ENCODE measurements at regions of chr11 and their contacts with region 1.

Region 1: DNA sequence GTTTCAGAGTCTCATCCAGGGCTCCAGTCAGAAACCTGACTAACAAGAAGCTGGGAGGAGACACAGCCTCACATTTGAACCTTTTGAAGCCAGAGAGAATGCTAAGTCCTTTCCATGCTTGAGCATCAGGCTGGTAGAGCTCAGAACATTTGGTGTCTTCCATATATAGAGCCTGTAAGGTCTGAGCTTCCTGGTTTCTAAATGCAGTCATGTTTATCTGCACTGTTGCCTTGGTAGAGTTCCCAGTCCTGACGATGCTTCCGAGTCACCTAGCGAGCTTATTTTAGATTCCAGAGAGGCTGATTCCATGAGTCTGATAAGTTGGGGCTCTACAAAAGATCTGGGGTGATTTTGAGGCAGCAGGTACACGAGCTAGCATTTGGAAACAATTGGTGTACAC is 68.4 kb upstream of the SORL1 start:
- DNase-seq: no peak
- ATAC-seq: no peak
- H3K4me3 Mint-ChIP-seq: no peak overlapping the region
- H3K27ac Mint-ChIP-seq: no peak overlapping the region
- H3K4me1 Mint-ChIP-seq: peaks cover 21% of the 10 kb centered on the region
- H3K27me3 Mint-ChIP-seq: no peaks in the 10 kb centered on the region
- CTCF ChIP-seq: no peak

Region 2: DNA sequence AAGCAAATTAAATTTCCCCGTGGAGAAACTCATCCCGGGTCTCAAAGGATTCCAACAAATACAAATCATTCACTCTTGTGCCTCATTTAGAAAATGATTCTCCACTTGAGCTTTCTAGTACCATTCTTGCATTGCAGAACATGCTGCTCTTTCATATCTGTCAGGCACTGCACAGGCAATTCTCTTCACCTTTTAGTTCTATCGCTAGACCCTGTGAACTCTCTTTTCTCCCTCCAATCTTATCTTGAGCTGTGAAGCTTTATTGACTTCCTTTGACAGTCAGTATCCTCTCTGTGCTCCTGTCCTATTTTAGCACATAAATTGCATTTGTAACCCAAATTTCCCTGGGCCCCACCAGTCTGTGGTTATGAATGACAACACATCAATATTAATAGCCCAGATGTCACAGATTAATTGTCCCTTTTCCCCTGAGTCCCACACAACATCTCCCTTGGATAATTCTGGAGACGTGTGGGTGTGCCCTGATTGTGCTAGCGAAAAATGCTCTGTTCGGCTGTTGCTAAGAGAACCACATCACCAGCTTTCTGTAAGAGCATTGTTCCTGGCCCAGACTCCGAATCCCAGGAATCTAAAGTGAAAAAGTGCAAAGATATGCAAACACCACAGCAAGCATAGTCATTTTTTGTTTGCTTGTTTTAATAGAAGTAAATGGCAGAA is 113.6 kb before region 1 on chr11:
- CTCF ChIA-PET with region 1: no interaction called
- POLR2A ChIA-PET with region 1: no interaction called
- DNase-seq: no peak
- ATAC-seq: no peak
- H3K4me3 Mint-ChIP-seq: no peak overlapping the region
- H3K27ac Mint-ChIP-seq: no peak overlapping the region
- H3K4me1 Mint-ChIP-seq: peaks cover 15% of the 10 kb centered on the region
- H3K27me3 Mint-ChIP-seq: peaks cover 4% of the 10 kb centered on the region; the same call in 1 of the 2 replicates
- CTCF ChIP-seq: no peak

Region 3: DNA sequence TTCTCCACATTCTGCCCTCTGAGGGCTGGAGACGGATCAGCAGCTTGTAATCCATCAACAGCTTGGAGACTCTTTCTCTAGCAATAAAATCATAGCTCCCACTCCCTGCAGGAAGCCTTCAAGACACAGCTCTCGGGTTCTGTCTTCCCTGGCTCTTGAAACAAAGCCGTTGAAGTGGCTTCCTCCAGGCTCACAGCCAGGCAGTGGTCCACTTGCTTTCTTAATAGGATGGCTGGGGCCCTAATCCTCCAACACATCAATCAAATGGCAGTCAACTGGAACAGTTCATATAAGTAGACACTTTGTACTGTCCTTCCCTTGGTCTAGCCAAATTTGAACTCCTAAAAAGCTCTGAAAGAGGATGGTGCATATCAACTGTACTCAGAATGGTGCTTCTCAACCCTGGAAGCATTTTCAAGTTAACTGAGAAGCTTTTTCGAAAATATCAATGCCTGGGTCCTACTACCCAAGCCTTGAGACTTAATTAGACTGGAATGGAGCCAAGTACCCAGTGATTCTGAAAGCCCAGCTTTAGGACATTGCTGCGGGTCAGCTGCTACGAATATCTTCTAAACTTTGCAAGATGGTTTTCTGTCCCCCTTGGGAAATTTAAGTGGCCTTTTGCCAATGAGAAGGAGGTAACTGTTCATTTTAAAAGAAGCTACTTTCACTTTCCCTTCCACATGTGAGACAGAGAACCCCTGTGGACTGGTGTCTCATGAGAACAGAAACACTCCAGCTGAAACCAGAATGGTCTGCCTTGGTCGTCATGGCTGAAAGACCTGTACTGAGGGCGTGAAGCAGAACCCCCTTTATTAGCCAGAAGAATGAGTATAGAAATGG is 16.5 kb before region 1 on chr11:
- CTCF ChIA-PET with region 1: interaction called, 20 read pairs
- POLR2A ChIA-PET with region 1: no interaction called
- DNase-seq: no peak
- ATAC-seq: no peak
- H3K4me3 Mint-ChIP-seq: no peak overlapping the region
- H3K27ac Mint-ChIP-seq: no peak overlapping the region
- H3K4me1 Mint-ChIP-seq: peaks cover 37% of the 10 kb centered on the region
- H3K27me3 Mint-ChIP-seq: peaks cover 3% of the 10 kb centered on the region
- CTCF ChIP-seq: no peak

Region 4: GRCh38 chr11:121406291-121406690 is 22.6 kb after region 1 on chr11:
- CTCF ChIA-PET with region 1: interaction called, 11 read pairs
- POLR2A ChIA-PET with region 1: no interaction called
- DNase-seq: peak; percentile 25
- ATAC-seq: peak; percentile 97
- H3K4me3 Mint-ChIP-seq: peak overlapping the region; percentile 35; the same call in 1 of the 2 replicates
- H3K27ac Mint-ChIP-seq: peak overlapping the region; percentile 95
- H3K4me1 Mint-ChIP-seq: peaks cover 55% of the 10 kb centered on the region
- H3K27me3 Mint-ChIP-seq: no peaks in the 10 kb centered on the region
- CTCF ChIP-seq: no peak

Measured in WTC11 (cell line).